Left cardiac atrium (tissue), 4 donors: ENCODE measurements at regions of chr9 and their contacts with region 1.

Region 1: DNA sequence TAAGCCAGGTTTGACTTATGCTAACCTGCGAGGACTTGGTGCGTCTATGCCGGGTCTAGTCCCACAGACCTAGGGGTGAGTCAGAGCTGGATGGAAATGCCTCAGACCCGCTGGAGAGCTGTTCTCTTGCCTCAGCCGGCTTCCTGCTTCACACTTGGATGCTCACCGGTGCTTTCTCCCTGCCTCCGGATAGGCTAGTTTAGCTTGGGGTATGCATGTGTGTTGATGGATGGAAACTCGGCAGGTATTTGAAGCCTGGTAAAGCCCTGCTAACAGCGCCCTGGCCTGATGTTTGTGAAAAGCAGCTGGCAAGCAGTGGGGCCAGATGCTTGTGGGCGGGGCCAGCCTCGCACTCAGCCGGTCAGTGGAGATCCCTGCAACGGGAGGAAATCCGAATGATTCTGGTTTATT is 29.3 kb downstream of the PRRC2B start:
- DNase-seq: peak; percentile 62
- ATAC-seq: peak; percentile 76 to 89

Region 2: DNA sequence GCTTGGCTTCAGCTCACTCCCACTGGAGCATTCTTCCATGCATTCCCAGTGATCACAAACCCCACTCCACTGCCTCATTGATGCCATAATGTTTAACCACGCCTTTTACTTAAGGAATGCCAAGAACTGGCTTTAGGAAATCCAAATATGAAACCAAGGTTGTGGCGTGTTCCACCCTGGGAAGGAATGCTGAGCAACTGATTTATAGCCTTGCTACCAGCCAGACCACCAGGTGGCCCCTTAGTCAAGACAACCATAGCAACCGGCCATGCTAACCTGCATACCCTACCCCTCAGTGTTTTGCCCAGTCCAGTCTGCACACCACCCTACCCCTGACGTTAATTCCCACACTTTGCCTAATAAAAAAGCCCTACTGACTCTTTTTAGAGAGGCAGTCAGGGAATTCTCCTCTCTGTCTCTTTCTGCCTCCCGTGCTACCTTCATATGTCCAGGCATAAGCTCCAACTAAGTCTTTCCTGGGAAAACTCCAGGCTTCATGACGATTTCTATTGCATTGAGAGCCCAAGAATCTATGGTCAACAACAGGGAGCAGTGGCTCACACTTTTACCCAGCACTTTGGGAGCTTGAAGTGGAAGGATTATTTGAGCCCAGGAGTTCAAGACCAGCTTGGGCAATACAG is 56.3 kb before region 1 on chr9:
- intact Hi-C with region 1: loop called in 1 of 2 experiments (anchors 5 kb)
- DNase-seq: no peak
- ATAC-seq: peak; percentile 86 to 87